ENCODE measurements at regions of chr16 and their contacts with region 1.

Region 1: DNA sequence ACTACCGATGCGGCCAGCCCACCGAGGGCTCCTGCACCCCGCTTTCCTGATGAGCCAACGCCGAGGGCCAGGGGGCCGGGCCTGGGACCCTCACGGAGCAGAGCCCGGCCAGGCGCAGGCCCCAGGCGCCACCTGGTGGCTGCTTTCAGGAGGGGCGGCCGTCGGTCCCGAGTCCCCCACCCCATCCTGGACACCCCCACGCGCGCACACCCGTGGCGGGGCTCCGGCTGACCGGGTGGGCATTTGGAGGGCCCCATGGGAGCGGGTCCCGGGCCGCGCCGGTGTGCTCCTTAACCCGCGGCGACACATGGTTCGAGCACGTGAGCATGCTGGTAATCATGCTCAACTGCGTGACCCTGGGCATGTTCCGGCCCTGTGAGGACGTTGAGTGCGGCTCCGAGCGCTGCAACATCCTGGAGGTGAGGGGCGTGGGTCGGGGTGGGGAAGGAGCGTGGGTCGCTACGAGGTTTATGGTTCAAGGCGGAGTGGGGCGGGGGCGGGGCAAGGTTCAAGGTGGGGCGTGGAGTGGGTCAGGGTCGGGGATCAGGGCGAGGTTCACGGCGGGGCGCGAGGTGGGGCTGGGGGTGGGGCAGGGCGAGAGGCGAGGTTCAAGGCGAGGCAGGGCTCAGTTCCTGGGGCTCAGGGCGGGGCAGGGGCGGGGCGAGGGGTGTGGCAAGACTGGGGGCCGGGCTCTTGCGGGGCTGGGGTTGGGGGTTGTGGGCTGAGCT is 30.2 kb downstream of the TPSG1 start:
- DNase-seq: no peak
- ATAC-seq: peak in 1 of 4 donors; percentile 46
- H3K4me3 ChIP-seq: no peak overlapping the region
- H3K27ac ChIP-seq: no peak overlapping the region
- H3K4me1 ChIP-seq: no peaks in the 10 kb centered on the region
- H3K27me3 ChIP-seq: peaks cover 0 to 48% (median 8%) of the 10 kb centered on the region in 3 donors
- CTCF ChIP-seq: peak; percentile 64

Region 2: DNA sequence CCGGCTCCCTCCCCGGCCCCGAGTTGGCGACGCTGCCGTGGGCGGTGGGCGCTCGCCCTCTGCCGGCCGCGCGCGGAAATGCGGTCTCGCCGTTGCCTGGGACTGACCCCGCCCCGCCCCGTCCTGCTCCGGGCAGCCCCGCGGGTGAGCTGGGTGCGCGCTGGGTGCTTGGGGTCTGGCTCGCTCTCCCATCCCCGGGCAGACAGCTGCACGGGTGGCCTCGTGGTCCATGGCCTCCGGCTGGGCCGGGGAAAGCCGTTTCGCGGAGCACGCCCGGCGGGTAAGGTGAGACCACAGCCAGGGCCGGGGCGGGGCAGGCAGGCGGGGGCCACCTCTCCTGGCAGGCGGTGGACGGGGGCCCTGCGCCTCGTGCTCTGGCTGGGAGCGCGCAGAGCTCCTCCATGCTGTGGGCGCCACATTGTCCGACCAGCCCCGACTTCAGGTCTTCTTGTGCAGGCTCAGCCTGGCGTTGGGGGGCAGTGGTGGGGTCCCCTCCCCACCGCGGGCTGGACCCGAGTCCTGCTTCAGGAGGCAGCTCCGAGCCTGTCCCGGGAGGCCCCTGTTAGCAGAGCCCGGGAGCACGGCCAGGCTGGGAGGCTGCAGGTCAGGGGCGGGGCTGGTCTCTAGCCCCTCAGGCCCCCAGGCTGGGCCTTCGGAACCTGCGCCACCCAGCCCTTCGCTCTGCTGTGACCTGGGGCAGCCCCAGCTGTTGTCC is 91.8 kb before region 1 on chr16:
- intact Hi-C with region 1: loop called in 1 of 2 experiments (anchors 1 kb)
- DNase-seq: peak; percentile 65 to 84
- ATAC-seq: peak; percentile 59 to 68 (median 64)
- H3K4me3 ChIP-seq: peak overlapping the region; percentile 35
- H3K27ac ChIP-seq: no peak overlapping the region
- H3K4me1 ChIP-seq: peaks cover 8% of the 10 kb centered on the region
- H3K27me3 ChIP-seq: peaks cover 0 to 54% (median 3%) of the 10 kb centered on the region in 3 donors
- CTCF ChIP-seq: peak; percentile 65

Region 3: DNA sequence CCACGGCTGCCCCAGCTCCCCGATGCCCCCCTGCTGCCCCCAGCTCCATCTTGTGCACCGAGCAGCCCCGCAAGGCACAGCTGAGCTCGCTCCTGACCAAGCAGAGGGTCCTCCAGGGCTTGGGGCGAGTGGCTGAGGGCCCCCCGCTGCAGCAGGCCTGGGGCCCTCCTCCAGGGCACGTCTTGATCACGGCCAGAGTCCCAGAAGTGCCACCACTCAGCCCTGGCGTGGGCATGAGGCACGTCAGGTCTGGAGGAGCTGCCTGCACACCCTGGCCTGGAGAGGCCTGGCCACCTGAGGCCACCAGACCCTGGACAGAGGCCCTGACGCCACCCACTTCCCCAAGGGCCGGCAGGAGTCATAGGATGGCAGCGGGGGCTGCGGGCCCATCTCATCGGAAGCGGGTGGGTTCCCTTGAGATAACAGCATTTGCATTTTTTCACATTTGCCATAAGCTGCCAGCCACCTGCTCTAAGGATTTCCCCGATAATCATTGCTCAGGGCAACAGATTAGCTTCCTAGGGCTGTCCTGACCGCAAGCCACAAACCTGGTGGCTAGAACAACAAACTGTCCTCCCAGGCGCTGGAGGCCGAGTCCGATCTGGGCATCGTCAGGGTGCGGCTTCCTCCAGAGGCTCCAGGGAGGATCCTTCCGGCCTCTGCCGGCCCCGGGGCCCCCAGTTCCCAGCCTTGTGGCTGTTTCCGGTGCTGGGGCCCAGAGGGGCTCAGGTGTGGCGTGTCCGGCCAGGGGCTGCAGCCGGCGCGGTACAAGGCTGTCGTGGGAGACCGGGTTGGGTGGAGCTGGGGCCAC is 74.9 kb before region 1 on chr16:
- intact Hi-C with region 1: loop called in 1 of 2 experiments (anchors 5 kb)
- DNase-seq: no peak
- ATAC-seq: no peak
- H3K4me3 ChIP-seq: no peak overlapping the region
- H3K27ac ChIP-seq: no peak overlapping the region
- H3K4me1 ChIP-seq: no peaks in the 10 kb centered on the region
- H3K27me3 ChIP-seq: peaks cover 0 to 73% (median 14%) of the 10 kb centered on the region in 3 donors
- CTCF ChIP-seq: no peak

Region 4: DNA sequence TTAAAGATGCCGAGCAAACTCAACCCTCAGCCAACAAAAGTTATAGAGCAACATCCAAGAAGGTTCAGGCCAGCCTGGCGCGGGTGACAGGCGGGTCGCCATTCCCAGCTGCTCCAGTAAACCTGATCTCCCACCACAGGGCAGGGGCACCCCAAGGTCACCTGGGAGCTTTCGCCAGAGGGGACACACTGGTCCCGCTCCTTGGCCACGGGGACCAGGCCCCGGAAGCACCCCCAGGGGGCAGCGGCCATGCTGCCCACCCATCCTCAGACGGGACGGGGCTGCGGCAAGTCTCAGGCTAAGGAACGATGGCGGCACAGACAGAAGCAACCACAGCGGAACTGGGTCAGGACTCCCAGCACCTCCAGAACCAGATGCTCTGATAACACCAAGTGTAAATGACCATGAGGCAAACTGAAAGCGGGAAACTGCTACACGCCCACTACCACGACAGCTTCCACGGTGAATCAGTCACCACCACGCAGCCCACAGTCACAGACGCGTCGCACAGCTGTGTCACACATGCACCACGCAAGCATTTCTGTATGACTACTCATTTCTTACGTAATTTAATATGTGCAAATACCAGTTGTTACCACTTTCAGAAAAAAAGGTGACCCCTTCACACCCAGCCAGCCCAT is 263.6 kb after region 1 on chr16:
- intact Hi-C with region 1: no loop called
- DNase-seq: no peak
- ATAC-seq: no peak
- H3K4me3 ChIP-seq: no peak overlapping the region
- H3K27ac ChIP-seq: no peak overlapping the region
- H3K4me1 ChIP-seq: no peaks in the 10 kb centered on the region
- H3K27me3 ChIP-seq: no peaks in the 10 kb centered on the region
- CTCF ChIP-seq: no peak